ENCODE measurements at regions of chr17 and their contacts with region 1.

Region 1: DNA sequence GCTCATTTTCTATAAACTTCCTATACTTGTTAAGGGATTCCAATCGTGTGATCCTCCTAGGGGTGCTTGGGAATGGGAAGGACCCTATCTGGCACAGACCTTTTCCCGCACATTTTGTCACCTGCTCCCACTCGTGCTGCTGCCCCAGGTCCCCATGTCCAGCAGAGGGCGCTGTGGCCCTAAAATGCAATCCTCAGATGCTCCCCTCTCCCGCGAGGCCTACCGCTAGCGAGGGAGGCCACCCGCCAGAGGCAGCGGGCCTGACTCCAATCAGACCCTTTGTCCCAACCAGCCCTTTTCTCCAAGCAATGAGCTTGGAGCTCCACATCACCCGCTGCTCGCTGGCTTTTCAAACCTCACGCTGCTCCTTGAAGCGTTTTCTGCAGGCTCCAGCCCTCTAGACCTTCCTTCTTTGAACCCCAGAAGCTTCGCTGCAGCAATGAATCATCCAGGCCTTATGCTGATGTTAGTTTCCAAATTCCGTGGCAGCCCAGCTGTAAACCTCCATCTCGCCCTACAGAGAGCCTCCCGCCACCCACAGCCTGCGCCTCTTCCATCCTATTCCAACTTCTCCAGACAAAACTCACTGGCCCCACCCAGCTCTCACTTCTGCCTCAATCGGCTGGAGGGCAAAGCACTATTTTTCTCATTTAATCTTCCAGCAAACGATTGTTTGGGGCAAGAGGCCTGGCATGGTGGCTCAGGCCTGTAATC is 23.6 kb upstream of the FZD2 start:
- DNase-seq: peak; percentile 93
- H3K4me3 Mint-ChIP-seq: no peak overlapping the region
- H3K27ac Mint-ChIP-seq: no peak overlapping the region
- H3K4me1 Mint-ChIP-seq: peaks cover 8% of the 10 kb centered on the region
- H3K27me3 Mint-ChIP-seq: no peaks in the 10 kb centered on the region

Region 2: GRCh38 chr17:44522883-44523671 is 10.6 kb before region 1 on chr17:
- CTCF ChIA-PET with region 1: interaction called, 22 read pairs
- intact Hi-C with region 1: no loop called
- DNase-seq: peak; percentile 87
- H3K4me3 Mint-ChIP-seq: no peak overlapping the region
- H3K27ac Mint-ChIP-seq: no peak overlapping the region
- H3K4me1 Mint-ChIP-seq: no peaks in the 10 kb centered on the region
- H3K27me3 Mint-ChIP-seq: peaks cover 2% of the 10 kb centered on the region

Region 3: GRCh38 chr17:44599298-44600175 is 65.8 kb after region 1 on chr17:
- CTCF ChIA-PET with region 1: no interaction called
- intact Hi-C with region 1: no loop called
- DNase-seq: no peak
- H3K4me3 Mint-ChIP-seq: no peak overlapping the region
- H3K27ac Mint-ChIP-seq: no peak overlapping the region
- H3K4me1 Mint-ChIP-seq: no peaks in the 10 kb centered on the region
- H3K27me3 Mint-ChIP-seq: peaks cover 2% of the 10 kb centered on the region

Region 4: GRCh38 chr17:44636562-44636961 is 102.9 kb after region 1 on chr17:
- CTCF ChIA-PET with region 1: interaction called, 14 read pairs
- intact Hi-C with region 1: loop called (anchors 1 kb)
- DNase-seq: no peak
- H3K4me3 Mint-ChIP-seq: no peak overlapping the region
- H3K27ac Mint-ChIP-seq: no peak overlapping the region
- H3K4me1 Mint-ChIP-seq: no peaks in the 10 kb centered on the region
- H3K27me3 Mint-ChIP-seq: peaks cover under 1% of the 10 kb centered on the region

Region 5: GRCh38 chr17:44672479-44673093 is 138.9 kb after region 1 on chr17:
- CTCF ChIA-PET with region 1: interaction called, 10 read pairs
- intact Hi-C with region 1: loop called (anchors 1 kb)
- DNase-seq: no peak
- H3K4me3 Mint-ChIP-seq: no peak overlapping the region
- H3K27ac Mint-ChIP-seq: no peak overlapping the region
- H3K4me1 Mint-ChIP-seq: no peaks in the 10 kb centered on the region
- H3K27me3 Mint-ChIP-seq: no peaks in the 10 kb centered on the region

Region 6: GRCh38 chr17:44820631-44821212 is 287.0 kb after region 1 on chr17:
- CTCF ChIA-PET with region 1: no interaction called
- intact Hi-C with region 1: no loop called
- DNase-seq: no peak
- H3K4me3 Mint-ChIP-seq: no peak overlapping the region
- H3K27ac Mint-ChIP-seq: no peak overlapping the region
- H3K4me1 Mint-ChIP-seq: no peaks in the 10 kb centered on the region
- H3K27me3 Mint-ChIP-seq: peaks cover 10% of the 10 kb centered on the region

Region 7: DNA sequence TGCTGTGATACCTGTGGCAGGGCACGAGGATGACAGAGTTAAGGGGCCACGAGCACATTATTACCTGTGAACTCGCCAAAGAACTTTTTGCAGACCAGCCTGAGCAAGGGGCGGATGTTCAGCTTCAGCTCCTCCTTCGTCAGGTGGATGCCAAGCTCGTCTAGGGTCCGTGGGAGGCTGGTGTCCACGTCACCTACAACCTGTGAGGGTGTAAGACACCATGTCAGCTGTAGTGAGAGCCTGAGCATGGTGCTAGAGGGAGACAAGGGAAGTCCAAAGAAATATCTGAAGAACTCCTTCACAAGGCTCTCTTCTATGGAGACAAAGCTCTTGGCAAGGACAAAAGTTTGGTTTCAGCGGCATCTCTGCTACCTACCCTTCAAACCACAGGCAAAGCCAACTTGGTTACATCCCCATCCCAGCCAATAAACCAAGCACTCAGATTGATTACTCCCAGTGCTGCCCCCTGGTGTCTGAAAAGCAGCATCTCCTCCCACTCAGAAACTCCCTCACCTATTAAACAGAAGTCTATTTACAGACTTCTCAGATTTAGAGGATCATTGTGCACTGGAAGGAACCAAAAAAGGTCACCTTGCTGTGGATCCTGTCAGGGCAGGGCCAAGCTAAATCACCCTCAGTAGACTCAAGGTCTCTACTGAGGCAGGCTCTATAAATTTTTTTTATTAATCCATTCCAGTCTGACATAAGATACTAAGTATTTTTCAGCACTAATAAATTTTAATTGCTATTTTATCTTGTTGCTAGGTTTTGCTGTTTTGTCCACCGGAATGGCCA is 331.4 kb after region 1 on chr17:
- CTCF ChIA-PET with region 1: no interaction called
- intact Hi-C with region 1: loop called (anchors 10 kb)
- DNase-seq: peak; percentile 78
- H3K4me3 Mint-ChIP-seq: no peak overlapping the region
- H3K27ac Mint-ChIP-seq: no peak overlapping the region
- H3K4me1 Mint-ChIP-seq: no peaks in the 10 kb centered on the region
- H3K27me3 Mint-ChIP-seq: no peaks in the 10 kb centered on the region